Panc1 (cell line): ENCODE measurements at regions of chr15 and their contacts with region 1.

Region 1: GRCh38 chr15:52568601-52569256 is at the start of gene ARPP19:
- DNase-seq: peak; percentile 69
- ATAC-seq: peak; percentile 96
- H3K4me3 ChIP-seq: peak within 1 kb of the TSS; percentile 86 to 97
- H3K27ac ChIP-seq: peak within 1 kb of the TSS; percentile 97
- H3K4me1 ChIP-seq: peaks cover 21% of the 10 kb centered on the region
- H3K27me3 ChIP-seq: no peaks in the 10 kb centered on the region
- CTCF ChIP-seq: no peak
- total RNA-seq, gene ARPP19: 153 TPM

Region 2: GRCh38 chr15:52440400-52440799 is 128.3 kb before region 1 on chr15:
- CTCF ChIA-PET with region 1: no interaction called
- POLR2A ChIA-PET with region 1: no interaction called
- in situ Hi-C with region 1: no loop called
- intact Hi-C with region 1: no loop called
- DNase-seq: no peak
- ATAC-seq: no peak
- H3K4me3 ChIP-seq: no peak overlapping the region
- H3K27ac ChIP-seq: no peak overlapping the region
- H3K4me1 ChIP-seq: 0 out of 2 replicates have a peak, but pooled peaks cover 7% of the 10 kb centered on the region
- H3K27me3 ChIP-seq: no peaks in the 10 kb centered on the region
- CTCF ChIP-seq: no peak

Region 3: DNA sequence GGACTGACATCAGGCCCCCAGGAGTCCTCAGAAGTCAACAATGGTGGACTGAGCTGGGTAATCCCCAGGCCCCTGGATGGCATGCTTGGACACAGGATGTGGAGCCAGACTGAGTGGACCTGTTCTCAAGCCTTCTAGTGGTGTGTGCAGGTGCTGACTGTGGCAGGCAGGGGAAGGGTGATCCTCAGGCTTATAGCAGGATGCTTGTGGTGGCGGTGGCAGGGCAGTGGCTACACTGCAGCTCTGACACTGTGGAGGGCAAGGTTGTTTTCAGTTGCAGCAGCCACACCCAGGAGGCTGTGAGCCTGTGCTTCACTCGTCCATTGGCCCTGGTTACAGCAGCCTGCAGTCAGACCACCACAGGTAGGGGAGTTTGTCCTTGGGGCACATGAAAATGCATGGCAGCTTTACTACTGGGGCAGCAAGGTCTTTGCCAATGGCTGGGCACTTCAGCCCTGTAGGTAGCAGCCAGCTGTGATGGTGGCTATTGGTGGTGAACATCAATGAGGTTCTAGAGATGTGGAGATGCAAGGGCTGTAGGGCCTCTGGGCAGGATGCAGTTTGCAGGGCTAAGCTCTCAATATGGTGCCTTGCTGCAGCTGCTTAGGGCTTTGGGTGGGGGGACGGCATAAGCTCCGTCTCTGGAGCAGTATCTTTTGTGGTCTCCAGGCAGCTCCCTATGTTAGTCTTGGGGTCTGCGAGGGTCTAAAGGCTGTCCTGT is 22.5 kb before region 1 on chr15:
- CTCF ChIA-PET with region 1: no interaction called
- POLR2A ChIA-PET with region 1: no interaction called
- in situ Hi-C with region 1: no loop called
- intact Hi-C with region 1: no loop called
- DNase-seq: no peak
- ATAC-seq: peak; percentile 66
- H3K4me3 ChIP-seq: no peak overlapping the region
- H3K27ac ChIP-seq: no peak overlapping the region
- H3K4me1 ChIP-seq: no peaks in the 10 kb centered on the region
- H3K27me3 ChIP-seq: no peaks in the 10 kb centered on the region
- CTCF ChIP-seq: no peak

Region 4: DNA sequence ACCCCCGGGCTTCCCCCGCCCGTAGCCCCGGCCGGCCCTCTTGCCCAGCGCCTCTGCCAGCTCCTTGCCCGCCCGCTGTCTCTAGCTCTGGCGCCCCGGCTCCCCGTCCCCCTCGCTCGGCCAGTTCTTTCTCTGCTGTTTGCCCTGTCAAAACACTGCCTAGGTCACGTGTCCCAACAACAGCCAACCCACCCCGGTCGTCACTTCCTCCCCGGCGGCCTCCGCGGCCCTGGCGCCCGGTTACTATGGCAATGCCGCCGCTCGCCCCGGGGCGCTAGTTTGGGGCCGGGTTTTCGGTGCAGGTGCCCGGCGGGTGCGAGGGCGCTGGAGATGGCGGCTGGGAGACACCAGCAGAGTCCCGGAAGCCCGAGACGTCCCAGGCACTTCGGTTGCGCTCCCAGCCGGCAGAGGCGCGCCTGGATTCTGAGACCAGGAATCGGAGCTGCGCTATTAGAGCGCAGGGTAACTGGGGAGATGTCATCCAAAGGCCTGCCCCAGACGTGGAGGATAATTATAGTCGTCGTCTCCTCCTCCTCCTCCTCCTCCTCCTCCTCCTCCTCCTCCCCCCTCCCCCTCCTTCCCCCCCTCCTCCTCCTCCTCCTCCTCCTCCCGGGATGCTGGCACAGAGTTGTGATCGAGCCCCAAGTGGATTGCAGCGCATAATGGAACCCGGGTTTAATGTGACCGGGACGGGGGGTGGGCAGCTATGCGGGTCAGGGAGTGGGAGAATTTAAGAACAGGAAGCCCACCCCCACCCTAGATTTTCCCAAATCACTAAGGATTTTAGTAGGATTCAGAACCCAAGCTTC is 110.7 kb after region 1 on chr15 and contains the start of gene ATOSA:
- CTCF ChIA-PET with region 1: no interaction called
- POLR2A ChIA-PET with region 1: no interaction called
- in situ Hi-C with region 1: no loop called
- intact Hi-C with region 1: loop called (anchors 5 kb)
- DNase-seq: no peak
- ATAC-seq: peak; percentile 95
- H3K4me3 ChIP-seq: peak within 1 kb of the TSS; percentile 75 to 84
- H3K27ac ChIP-seq: peak within 1 kb of the TSS; percentile 79
- H3K4me1 ChIP-seq: peaks cover 18% of the 10 kb centered on the region; the same call in 1 of the 2 replicates
- H3K27me3 ChIP-seq: no peaks in the 10 kb centered on the region; the same call in 1 of the 2 replicates
- CTCF ChIP-seq: no peak
- total RNA-seq, gene ATOSA: 18.5 TPM